ENCODE measurements at regions of chr11 and their contacts with region 1.

Region 1: DNA sequence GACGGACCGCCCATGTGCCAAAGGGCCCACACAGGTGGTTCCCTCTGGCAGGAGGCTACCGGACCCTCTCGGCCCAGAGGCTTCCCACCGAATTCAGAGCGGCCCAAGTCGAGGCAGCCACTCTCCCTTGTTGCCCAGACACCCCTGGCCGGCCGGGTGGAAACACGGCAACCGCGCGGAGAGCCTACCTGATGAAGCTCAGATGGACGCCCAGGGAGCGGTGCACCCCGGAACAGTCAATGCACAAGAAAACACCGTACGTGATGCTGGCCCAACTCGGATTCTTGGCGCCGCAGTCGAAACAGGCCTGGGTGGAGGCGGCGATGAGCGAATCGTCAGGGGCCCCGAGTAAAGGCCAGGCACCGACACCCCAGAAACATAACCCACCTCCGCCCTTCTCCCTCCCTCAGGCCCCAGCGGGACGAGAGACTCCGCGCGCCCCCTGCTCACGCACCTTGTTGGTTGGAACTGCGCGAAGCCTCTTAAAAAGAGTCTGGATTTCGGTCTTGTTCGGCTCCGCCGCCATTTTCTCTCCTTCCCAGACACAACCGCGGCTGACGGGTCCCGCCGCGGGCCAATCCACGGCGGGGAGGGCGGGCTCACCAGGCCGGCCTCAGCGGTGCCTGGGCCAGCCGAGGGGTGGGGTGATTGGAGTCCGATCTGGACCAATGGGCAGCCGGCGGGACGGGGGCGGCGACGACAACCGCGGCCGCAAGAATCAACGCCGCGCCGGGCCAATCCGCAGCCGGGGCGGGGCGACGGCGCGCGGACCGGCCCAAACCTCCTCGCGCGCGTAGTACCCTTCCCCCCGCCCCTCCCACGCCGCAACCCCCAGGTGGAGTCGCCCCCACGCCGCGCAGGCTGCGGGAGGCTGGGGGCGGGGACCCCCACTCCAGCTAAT is at the start of gene ARFGAP2:
- DNase-seq: peak; percentile 96 to 98 (median 97)
- ATAC-seq: peak; percentile 92 to 97 (median 95)
- H3K4me3 ChIP-seq: peak within 1 kb of the TSS; percentile 72 to 93 (median 86)
- H3K27ac ChIP-seq: peak within 1 kb of the TSS; percentile 89 to 100 (median 96)
- H3K4me1 ChIP-seq: peaks cover 11 to 15% (median 14%) of the 10 kb centered on the region in 3 donors
- H3K27me3 ChIP-seq: no peaks in the 10 kb centered on the region
- CTCF ChIP-seq: no peak
- total RNA-seq, gene ARFGAP2: 40.1 to 67.5 (median 61.4) TPM

Region 2: GRCh38 chr11:47355283-47356128 is 178.9 kb after region 1 on chr11:
- intact Hi-C with region 1: loop called in 1 of 3 experiments (anchors 10 kb)
- DNase-seq: peak; percentile 94 to 99 (median 98)
- ATAC-seq: peak; percentile 91 to 95 (median 94)
- H3K4me3 ChIP-seq: peak overlapping the region in 3 of 4 donors; percentile 16 to 53 (median 41)
- H3K27ac ChIP-seq: no peak overlapping the region
- H3K4me1 ChIP-seq: peaks cover 0 to 10% (median 8%) of the 10 kb centered on the region in 3 donors
- H3K27me3 ChIP-seq: no peaks in the 10 kb centered on the region
- CTCF ChIP-seq: peak; percentile 67 to 93 (median 86)

Measured in pancreas (tissue), 10 donors.